CD4-positive, alpha-beta memory T cell (primary cell): ENCODE measurements at regions of chr17 and their contacts with region 1.

Region 1: DNA sequence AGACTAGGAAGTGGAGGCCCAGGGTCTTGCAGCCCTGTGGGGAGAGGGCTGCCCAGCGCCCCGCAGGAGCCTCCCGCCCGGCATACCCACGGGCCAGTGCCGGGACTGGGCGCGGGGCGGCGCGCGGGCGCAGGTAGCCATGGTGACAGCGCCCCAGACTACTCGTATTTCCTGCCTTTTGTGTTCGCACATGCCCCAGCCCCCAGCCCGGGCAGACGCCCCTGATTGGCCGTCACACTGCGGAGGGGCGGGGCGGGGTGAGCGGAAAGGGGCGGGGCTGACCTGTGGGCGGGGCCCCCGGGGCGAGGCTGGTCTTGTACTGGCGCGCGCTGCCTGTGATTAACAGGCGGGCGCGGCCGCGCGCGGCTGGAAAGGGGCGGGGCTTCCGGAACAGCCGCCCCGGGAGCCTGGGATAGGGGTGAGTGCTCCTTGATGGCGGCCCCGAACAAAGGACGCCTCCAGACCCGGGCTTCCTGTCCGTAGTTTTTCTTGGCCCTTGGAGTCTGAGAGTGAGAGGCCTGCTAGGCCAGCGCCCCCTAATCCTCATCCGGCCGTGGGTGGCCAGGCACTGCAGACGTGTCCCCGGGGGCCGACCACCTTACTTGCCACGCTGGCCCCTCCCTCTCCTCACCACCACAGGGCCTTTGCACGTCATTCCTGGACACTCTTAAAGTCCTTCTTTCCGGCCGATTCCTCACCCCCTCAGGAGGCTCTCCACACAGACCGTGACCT is 71.0 kb downstream of the RAI1 start:
- DNase-seq: peak; percentile 97 to 98 (median 98)
- H3K4me3 ChIP-seq: peak overlapping the region; percentile 49 to 72
- H3K4me3 Mint-ChIP-seq: peak overlapping the region; percentile 85 to 95 (median 93)
- H3K27ac ChIP-seq: peak overlapping the region; percentile 85
- H3K27ac Mint-ChIP-seq: peak overlapping the region; percentile 92 to 100 (median 98)
- H3K4me1 ChIP-seq: peaks cover 51% of the 10 kb centered on the region
- H3K4me1 Mint-ChIP-seq: peaks cover 30 to 71% (median 47%) of the 10 kb centered on the region in 4 donors
- H3K27me3 ChIP-seq: no peaks in the 10 kb centered on the region
- H3K27me3 Mint-ChIP-seq: no peaks in the 10 kb centered on the region

Region 2: DNA sequence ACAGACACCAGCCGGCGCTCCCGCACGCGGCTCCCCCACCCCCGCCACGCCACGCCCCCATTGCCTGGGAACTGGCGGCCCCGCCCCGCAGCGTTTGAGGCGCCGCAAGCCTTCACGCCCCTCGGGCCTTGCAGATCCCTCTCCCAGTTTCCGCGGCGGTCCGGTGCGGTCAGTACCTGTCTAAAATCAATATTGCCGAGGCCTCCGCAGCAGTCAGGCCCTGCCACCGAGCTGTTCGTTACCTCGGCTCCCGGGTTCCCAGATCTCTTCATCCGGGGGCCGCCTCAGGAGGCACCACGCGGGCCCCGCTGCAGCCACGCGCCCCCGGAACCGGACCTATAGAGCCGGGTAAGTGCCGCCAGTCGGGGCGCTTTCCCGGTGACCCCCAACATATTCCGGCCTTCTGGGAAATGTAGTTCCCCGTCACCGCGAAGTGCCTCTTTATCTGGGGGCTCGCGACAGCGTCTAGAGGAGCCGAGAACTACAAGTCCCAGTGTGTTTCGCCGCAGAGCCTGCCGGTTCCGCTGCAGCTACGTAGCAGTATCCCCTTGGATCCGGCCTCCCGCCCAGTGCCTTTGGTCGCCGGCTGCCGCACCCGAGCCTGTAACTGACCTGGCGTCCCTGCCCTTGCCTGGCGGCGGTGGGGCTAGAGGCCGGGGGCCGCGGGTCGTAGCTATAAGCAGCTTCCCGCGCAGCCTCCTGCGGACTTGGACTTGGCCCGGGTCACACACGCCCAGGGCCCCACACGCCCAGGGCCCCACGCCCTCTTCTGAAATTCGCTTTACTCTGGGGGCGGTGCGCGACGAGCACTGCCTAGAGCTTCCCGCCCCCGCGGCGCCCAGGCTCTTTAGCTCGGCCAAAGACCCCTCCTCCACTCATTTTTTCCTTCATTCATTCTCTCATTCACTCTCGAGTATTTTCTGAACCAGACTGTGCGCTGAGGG is 160.6 kb before region 1 on chr17 and contains the start of gene PEMT:
- CTCF ChIA-PET with region 1: no interaction called
- POLR2A ChIA-PET with region 1: interaction called, 4 read pairs
- intact Hi-C with region 1: loop called (anchors 5 kb)
- DNase-seq: peak; percentile 94 to 97 (median 94)
- H3K4me3 ChIP-seq: peak within 1 kb of the TSS; percentile 86 to 99
- H3K4me3 Mint-ChIP-seq: peak within 1 kb of the TSS; percentile 93 to 97 (median 95)
- H3K27ac ChIP-seq: peak within 1 kb of the TSS; percentile 73
- H3K27ac Mint-ChIP-seq: peak within 1 kb of the TSS; percentile 84 to 99 (median 96)
- H3K4me1 ChIP-seq: peaks cover 21% of the 10 kb centered on the region
- H3K4me1 Mint-ChIP-seq: peaks cover 11 to 29% (median 18%) of the 10 kb centered on the region in 4 donors
- H3K27me3 ChIP-seq: no peaks in the 10 kb centered on the region
- H3K27me3 Mint-ChIP-seq: no peaks in the 10 kb centered on the region
- total RNA-seq, gene PEMT: 11.6 to 13.8 TPM

Region 3: GRCh38 chr17:17626151-17626805 is 126.0 kb before region 1 on chr17:
- CTCF ChIA-PET with region 1: no interaction called
- POLR2A ChIA-PET with region 1: no interaction called
- intact Hi-C with region 1: no loop called
- DNase-seq: no peak
- H3K4me3 ChIP-seq: no peak overlapping the region
- H3K4me3 Mint-ChIP-seq: peak overlapping the region in 1 of 8 donors; percentile 24
- H3K27ac ChIP-seq: no peak overlapping the region
- H3K27ac Mint-ChIP-seq: no peak overlapping the region
- H3K4me1 ChIP-seq: peaks cover 11% of the 10 kb centered on the region
- H3K4me1 Mint-ChIP-seq: peaks cover 6 to 13% (median 10%) of the 10 kb centered on the region in 4 donors
- H3K27me3 ChIP-seq: no peaks in the 10 kb centered on the region
- H3K27me3 Mint-ChIP-seq: no peaks in the 10 kb centered on the region

Region 4: DNA sequence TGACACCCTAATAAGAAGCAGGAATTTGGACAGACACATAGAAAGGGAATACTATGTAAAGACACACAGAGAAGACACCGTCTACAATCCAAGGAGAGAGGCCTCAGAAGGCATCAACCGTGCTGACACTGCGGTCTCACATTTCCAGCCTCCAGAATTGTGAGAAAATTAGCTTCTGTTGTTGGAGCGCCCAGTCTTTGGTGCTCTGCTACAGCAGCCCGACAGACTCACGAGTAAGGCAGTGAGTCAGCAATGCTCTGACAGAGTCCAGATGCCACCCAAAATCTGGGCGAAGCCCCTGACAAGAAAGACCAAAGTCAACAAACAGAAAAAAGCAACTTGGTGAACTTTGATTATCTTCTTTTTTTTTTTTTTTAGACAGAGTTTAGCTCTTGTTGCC is 103.5 kb before region 1 on chr17:
- CTCF ChIA-PET with region 1: no interaction called
- POLR2A ChIA-PET with region 1: no interaction called
- intact Hi-C with region 1: no loop called
- DNase-seq: no peak
- H3K4me3 ChIP-seq: no peak overlapping the region
- H3K4me3 Mint-ChIP-seq: no peak overlapping the region
- H3K27ac ChIP-seq: no peak overlapping the region
- H3K27ac Mint-ChIP-seq: no peak overlapping the region
- H3K4me1 ChIP-seq: no peaks in the 10 kb centered on the region
- H3K4me1 Mint-ChIP-seq: no peaks in the 10 kb centered on the region
- H3K27me3 ChIP-seq: no peaks in the 10 kb centered on the region
- H3K27me3 Mint-ChIP-seq: peaks cover 2 to 10% of the 10 kb centered on the region in 2 donors

Region 5: GRCh38 chr17:17694169-17695081 is 57.8 kb before region 1 on chr17:
- CTCF ChIA-PET with region 1: no interaction called
- POLR2A ChIA-PET with region 1: interaction called, 11 read pairs
- intact Hi-C with region 1: loop called (anchors 1 kb)
- DNase-seq: peak; percentile 71 to 85 (median 77)
- H3K4me3 ChIP-seq: peak overlapping the region; percentile 38 to 63
- H3K4me3 Mint-ChIP-seq: peak overlapping the region; percentile 87 to 93 (median 89)
- H3K27ac ChIP-seq: peak overlapping the region; percentile 92
- H3K27ac Mint-ChIP-seq: peak overlapping the region; percentile 97 to 99 (median 99)
- H3K4me1 ChIP-seq: peaks cover 35% of the 10 kb centered on the region
- H3K4me1 Mint-ChIP-seq: peaks cover 16 to 66% (median 34%) of the 10 kb centered on the region in 4 donors
- H3K27me3 ChIP-seq: no peaks in the 10 kb centered on the region
- H3K27me3 Mint-ChIP-seq: no peaks in the 10 kb centered on the region

Region 6: DNA sequence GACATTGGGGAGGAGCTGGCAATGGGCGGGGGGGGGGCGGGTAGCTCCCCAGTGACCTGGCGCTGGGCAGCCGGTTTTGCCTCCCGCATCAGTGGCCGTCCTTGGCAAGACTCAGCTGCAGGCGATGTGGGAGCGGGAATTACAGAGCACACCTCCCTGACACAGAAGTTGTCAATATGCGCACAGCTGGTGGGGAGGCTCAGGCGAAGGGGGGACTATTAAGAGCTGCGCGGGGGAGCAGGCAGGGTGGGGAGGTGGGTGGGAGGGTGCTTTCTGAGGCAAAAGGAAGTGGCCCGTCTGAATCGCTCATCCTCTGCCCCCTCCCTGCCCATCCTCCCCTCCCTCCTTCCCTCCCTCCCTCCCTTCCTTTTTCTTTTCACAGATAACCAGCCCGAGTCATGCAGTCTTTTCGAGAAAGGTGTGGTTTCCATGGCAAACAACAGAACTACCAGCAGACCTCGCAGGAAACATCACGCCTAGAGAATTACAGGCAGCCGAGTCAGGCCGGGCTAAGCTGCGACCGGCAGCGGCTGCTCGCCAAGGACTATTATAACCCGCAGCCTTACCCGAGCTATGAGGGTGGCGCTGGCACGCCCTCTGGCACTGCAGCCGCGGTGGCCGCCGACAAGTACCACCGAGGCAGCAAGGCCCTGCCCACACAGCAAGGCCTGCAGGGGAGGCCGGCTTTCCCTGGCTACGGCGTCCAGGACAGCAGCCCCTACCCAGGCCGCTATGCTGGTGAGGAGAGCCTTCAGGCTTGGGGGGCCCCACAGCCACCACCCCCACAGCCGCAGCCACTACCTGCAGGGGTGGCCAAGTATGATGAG is 40.5 kb after region 1 on chr17:
- CTCF ChIA-PET with region 1: no interaction called
- POLR2A ChIA-PET with region 1: no interaction called
- intact Hi-C with region 1: loop called (anchors 1 kb)
- DNase-seq: peak; percentile 63 to 81 (median 70)
- H3K4me3 ChIP-seq: no peak overlapping the region
- H3K4me3 Mint-ChIP-seq: peak overlapping the region; percentile 64 to 84 (median 75)
- H3K27ac ChIP-seq: no peak overlapping the region
- H3K27ac Mint-ChIP-seq: peak overlapping the region; percentile 64 to 95 (median 90)
- H3K4me1 ChIP-seq: peaks cover 20% of the 10 kb centered on the region
- H3K4me1 Mint-ChIP-seq: peaks cover 12 to 33% (median 18%) of the 10 kb centered on the region in 4 donors
- H3K27me3 ChIP-seq: no peaks in the 10 kb centered on the region
- H3K27me3 Mint-ChIP-seq: no peaks in the 10 kb centered on the region

Region 7: GRCh38 chr17:17836250-17836817 is 84.1 kb after region 1 on chr17:
- CTCF ChIA-PET with region 1: no interaction called
- POLR2A ChIA-PET with region 1: interaction called, 14 read pairs
- intact Hi-C with region 1: loop called (anchors 1 kb)
- DNase-seq: peak; percentile 95 to 98 (median 97)
- H3K4me3 ChIP-seq: peak overlapping the region; percentile 48 to 64
- H3K4me3 Mint-ChIP-seq: peak overlapping the region; percentile 73 to 93 (median 89)
- H3K27ac ChIP-seq: peak overlapping the region; percentile 98
- H3K27ac Mint-ChIP-seq: peak overlapping the region; percentile 95 to 99 (median 98)
- H3K4me1 ChIP-seq: peaks cover 57% of the 10 kb centered on the region
- H3K4me1 Mint-ChIP-seq: peaks cover 35 to 78% (median 62%) of the 10 kb centered on the region in 4 donors
- H3K27me3 ChIP-seq: no peaks in the 10 kb centered on the region
- H3K27me3 Mint-ChIP-seq: no peaks in the 10 kb centered on the region

Region 8: DNA sequence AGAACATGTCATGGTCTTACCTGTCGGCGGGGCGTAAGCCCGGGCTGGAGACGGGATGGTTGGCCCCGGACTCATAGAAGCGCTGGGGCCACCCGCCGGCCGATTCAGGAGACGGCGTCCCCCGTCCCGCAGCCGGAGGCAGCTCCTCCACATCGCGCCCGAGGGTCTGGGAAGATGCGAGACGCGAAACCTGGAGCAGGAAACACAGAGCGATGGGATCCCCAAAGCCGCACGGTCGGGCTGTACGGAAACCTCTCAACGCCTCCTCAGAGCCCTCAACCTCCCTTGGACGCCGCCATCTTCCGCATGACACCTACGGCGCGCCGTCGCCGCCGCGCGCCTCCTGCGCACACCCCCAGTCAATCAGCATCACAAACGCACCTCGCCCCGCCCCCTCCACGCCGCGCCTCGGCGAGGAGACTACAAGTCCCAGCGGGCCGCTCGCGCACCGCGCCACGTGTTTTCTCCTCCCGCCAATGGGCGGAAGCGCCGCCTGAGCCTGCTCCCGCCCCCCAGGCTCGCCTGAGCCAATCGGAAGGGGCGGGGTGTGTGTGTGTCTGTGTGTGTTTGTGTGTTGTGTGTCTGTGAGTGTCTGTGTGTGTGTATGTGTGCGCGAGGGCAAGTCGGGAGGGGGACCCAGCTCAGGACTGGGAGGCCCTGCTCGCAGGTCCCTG is 286.7 kb after region 1 on chr17 and contains the starts of genes ATPAF2 and GID4:
- CTCF ChIA-PET with region 1: no interaction called
- POLR2A ChIA-PET with region 1: no interaction called
- intact Hi-C with region 1: loop called (anchors 1 kb)
- DNase-seq: peak; percentile 99 to 100 (median 100)
- H3K4me3 ChIP-seq: peak within 1 kb of the TSS; percentile 72 to 79
- H3K4me3 Mint-ChIP-seq: peak within 1 kb of the TSS; percentile 92 to 100 (median 100)
- H3K27ac ChIP-seq: peak within 1 kb of the TSS; percentile 73
- H3K27ac Mint-ChIP-seq: peak within 1 kb of the TSS; percentile 80 to 100 (median 99)
- H3K4me1 ChIP-seq: peaks cover 26% of the 10 kb centered on the region
- H3K4me1 Mint-ChIP-seq: peaks cover 34 to 60% (median 48%) of the 10 kb centered on the region in 4 donors
- H3K27me3 ChIP-seq: no peaks in the 10 kb centered on the region
- H3K27me3 Mint-ChIP-seq: no peaks in the 10 kb centered on the region
- total RNA-seq, gene ATPAF2: 24.1 to 24.3 TPM
- total RNA-seq, gene GID4: 11.1 to 13.1 TPM